HepG2 (cell line): ENCODE measurements at regions of chr12 and their contacts with region 1.

Region 1: GRCh38 chr12:54993161-54993835 is 8.7 kb upstream of the TESPA1 start:
- DNase-seq: peak; percentile 59
- ATAC-seq: peak; percentile 89
- H3K4me3 ChIP-seq: no peak overlapping the region
- H3K27ac ChIP-seq: no peak overlapping the region
- H3K4me1 ChIP-seq: no peaks in the 10 kb centered on the region
- H3K27me3 ChIP-seq: peaks cover 0 to 9% of the 10 kb centered on the region in 2 experiments; a peak in 1 of 5 replicates
- CTCF ChIP-seq: peak; percentile 83
- EP300 ChIP-seq: no peak
- POLR2A ChIP-seq: no peak
- RAD21 ChIP-seq: peak; percentile 42; the same call in 1 of the 2 replicates

Region 2: DNA sequence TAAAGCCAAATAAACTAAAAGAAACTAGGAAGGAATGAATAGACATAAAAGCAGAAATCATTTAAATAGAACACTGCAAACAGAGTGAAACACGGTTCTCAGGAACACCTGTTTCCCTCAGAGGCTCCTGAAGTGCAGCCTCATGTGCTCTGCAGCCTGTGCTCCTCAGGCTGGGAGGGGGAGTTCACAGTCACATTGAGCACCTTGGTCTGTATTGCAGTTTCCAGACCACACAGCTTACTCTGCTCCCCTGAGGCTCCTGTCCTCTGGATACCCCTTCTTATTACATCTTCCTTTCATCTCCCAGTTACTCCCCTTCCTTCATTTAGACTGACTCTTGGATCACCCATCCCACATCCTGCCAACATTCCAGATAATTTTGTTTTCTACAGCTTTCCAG is 295.4 kb before region 1 on chr12:
- CTCF ChIA-PET with region 1: no interaction called
- POLR2A ChIA-PET with region 1: no interaction called
- in situ Hi-C with region 1: no loop called
- intact Hi-C with region 1: no loop called
- DNase-seq: no peak
- ATAC-seq: no peak
- H3K4me3 ChIP-seq: no peak overlapping the region
- H3K27ac ChIP-seq: no peak overlapping the region
- H3K4me1 ChIP-seq: no peaks in the 10 kb centered on the region
- H3K27me3 ChIP-seq: no peaks in the 10 kb centered on the region; a peak in 1 of 5 replicates
- CTCF ChIP-seq: no peak
- EP300 ChIP-seq: no peak
- POLR2A ChIP-seq: no peak
- RAD21 ChIP-seq: no peak

Region 3: GRCh38 chr12:55142669-55143565 is 149.6 kb after region 1 on chr12:
- CTCF ChIA-PET with region 1: interaction called, 15 read pairs
- POLR2A ChIA-PET with region 1: no interaction called
- in situ Hi-C with region 1: loop called (anchors 10 kb)
- intact Hi-C with region 1: loop called (anchors 1 kb)
- DNase-seq: peak; percentile 40
- ATAC-seq: peak; percentile 35; the same call in 1 of the 3 replicates
- H3K4me3 ChIP-seq: no peak overlapping the region
- H3K27ac ChIP-seq: no peak overlapping the region
- H3K4me1 ChIP-seq: no peaks in the 10 kb centered on the region
- H3K27me3 ChIP-seq: no peaks in the 10 kb centered on the region
- CTCF ChIP-seq: peak; percentile 63
- EP300 ChIP-seq: no peak
- POLR2A ChIP-seq: no peak
- RAD21 ChIP-seq: no peak